Activated CD4-positive, alpha-beta memory T cell treated with anti-CD3 and anti-CD28 coated beads for 36 hours (primary cell): ENCODE measurements at regions of chr11 and their contacts with region 1.

Region 1: DNA sequence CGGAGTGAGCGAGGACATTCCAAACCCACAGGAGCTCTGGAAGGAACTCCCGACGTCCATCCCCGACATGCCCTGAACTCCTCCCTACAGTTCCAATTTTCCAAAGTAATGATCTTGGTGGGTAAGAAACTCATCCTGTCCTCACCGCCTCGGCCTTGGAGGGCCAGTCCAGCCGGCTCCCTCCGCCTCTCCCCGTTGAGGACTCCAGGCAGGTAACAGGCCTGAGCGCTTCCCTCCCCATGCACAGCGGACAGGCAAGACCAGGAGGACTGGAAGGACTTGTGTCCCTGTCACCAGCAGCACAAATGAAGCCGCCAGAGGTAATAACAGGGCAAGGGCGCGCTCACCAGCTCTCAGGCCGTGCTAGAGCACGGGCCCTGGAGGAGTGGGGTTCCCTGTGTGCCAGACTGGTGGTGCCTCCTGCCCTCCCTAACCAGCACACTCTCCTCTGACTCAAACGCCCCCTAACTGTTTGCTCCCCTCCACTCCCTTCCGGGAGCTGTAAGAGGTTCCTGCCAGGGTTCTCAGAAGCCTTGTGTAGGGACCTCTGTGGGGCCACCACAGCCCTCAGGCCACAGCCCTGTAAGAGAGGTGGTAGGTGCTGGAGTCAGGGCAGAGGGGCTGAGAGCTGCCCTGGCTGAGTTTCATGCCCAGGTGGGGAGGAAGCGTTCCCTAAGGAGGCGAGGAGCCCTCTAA is 17.1 kb downstream of the OVOL1 start:
- DNase-seq: no peak
- H3K4me3 Mint-ChIP-seq: no peak overlapping the region
- H3K27ac Mint-ChIP-seq: no peak overlapping the region
- H3K4me1 Mint-ChIP-seq: no peaks in the 10 kb centered on the region
- H3K27me3 Mint-ChIP-seq: peaks cover 22% of the 10 kb centered on the region

Region 2: GRCh38 chr11:65646921-65647751 is 156.8 kb before region 1 on chr11:
- CTCF ChIA-PET with region 1: no interaction called
- POLR2A ChIA-PET with region 1: no interaction called
- intact Hi-C with region 1: no loop called
- DNase-seq: no peak
- H3K4me3 Mint-ChIP-seq: no peak overlapping the region
- H3K27ac Mint-ChIP-seq: no peak overlapping the region
- H3K4me1 Mint-ChIP-seq: peaks cover 22% of the 10 kb centered on the region
- H3K27me3 Mint-ChIP-seq: no peaks in the 10 kb centered on the region

Region 3: GRCh38 chr11:65773784-65774411 is 30.0 kb before region 1 on chr11:
- CTCF ChIA-PET with region 1: interaction called, 11 read pairs
- POLR2A ChIA-PET with region 1: no interaction called
- intact Hi-C with region 1: no loop called
- DNase-seq: no peak
- H3K4me3 Mint-ChIP-seq: no peak overlapping the region
- H3K27ac Mint-ChIP-seq: no peak overlapping the region
- H3K4me1 Mint-ChIP-seq: peaks cover 15% of the 10 kb centered on the region
- H3K27me3 Mint-ChIP-seq: no peaks in the 10 kb centered on the region